Naive thymus-derived CD4-positive, alpha-beta T cell (primary cell): ENCODE measurements at regions of chr2 and their contacts with region 1.

Region 1: DNA sequence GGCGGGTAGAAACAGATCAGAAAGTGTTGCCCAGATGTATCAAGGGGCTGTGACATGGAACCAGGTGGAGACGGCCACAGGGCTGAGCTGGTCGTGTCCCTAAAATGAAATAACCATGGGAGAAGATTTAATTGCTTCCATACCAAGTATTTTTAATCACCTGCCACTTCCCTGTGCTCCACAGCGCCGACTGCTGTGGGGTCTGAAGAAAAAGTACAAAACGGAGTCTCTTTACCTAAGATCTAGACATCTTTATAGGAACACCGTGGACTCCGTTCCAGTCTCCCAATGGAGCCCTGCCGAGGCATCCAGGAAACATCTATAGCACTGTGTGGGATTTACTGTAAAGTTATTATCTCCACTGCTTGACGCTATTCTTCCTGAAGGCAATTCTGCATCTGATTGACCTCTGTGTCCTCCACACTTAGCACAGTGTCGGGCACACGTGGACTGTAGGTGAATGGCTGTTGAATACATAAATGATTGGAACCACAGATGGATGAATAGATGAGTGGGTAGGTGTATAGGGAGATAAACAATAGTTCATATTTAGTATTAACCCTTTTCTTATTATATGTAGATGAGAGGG is 21.6 kb upstream of the GYPC start:
- DNase-seq: peak in 7 of 9 donors; percentile 12 to 35 (median 21)
- ATAC-seq: peak; percentile 50
- H3K4me3 ChIP-seq: no peak overlapping the region
- H3K4me3 Mint-ChIP-seq: no peak overlapping the region
- H3K27ac ChIP-seq: no peak overlapping the region
- H3K27ac Mint-ChIP-seq: peak overlapping the region in 1 of 9 donors; percentile 33
- H3K4me1 ChIP-seq: no peaks in the 10 kb centered on the region
- H3K4me1 Mint-ChIP-seq: peaks cover 0 to 10% (median 4%) of the 10 kb centered on the region in 7 donors
- H3K27me3 ChIP-seq: peaks cover 0 to 3% of the 10 kb centered on the region in 2 donors
- H3K27me3 Mint-ChIP-seq: peaks cover 0 to 51% (median 0%) of the 10 kb centered on the region in 5 donors

Region 2: GRCh38 chr2:126527836-126528507 is 106.4 kb before region 1 on chr2:
- CTCF ChIA-PET with region 1: interaction called, 7 read pairs
- POLR2A ChIA-PET with region 1: no interaction called
- intact Hi-C with region 1: loop called (anchors 1 to 5 kb)
- DNase-seq: peak; percentile 43 to 74 (median 64)
- ATAC-seq: peak; percentile 79
- H3K4me3 ChIP-seq: no peak overlapping the region
- H3K4me3 Mint-ChIP-seq: no peak overlapping the region
- H3K27ac ChIP-seq: no peak overlapping the region
- H3K27ac Mint-ChIP-seq: no peak overlapping the region
- H3K4me1 ChIP-seq: no peaks in the 10 kb centered on the region
- H3K4me1 Mint-ChIP-seq: no peaks in the 10 kb centered on the region
- H3K27me3 ChIP-seq: no peaks in the 10 kb centered on the region
- H3K27me3 Mint-ChIP-seq: peaks cover 0 to 3% (median 0%) of the 10 kb centered on the region in 5 donors

Region 3: GRCh38 chr2:126664234-126664633 is 29.9 kb after region 1 on chr2:
- CTCF ChIA-PET with region 1: interaction called, 3 read pairs
- POLR2A ChIA-PET with region 1: interaction called, 9 read pairs
- intact Hi-C with region 1: loop called in 1 of 2 experiments (anchors 5 kb)
- DNase-seq: peak in 6 of 9 donors; percentile 31 to 47 (median 38)
- ATAC-seq: peak; percentile 70
- H3K4me3 ChIP-seq: peak overlapping the region; percentile 20
- H3K4me3 Mint-ChIP-seq: peak overlapping the region; percentile 68 to 95 (median 84)
- H3K27ac ChIP-seq: peak overlapping the region; percentile 98
- H3K27ac Mint-ChIP-seq: peak overlapping the region; percentile 93 to 99 (median 97)
- H3K4me1 ChIP-seq: peaks cover 56 to 71% of the 10 kb centered on the region in 2 donors
- H3K4me1 Mint-ChIP-seq: peaks cover 75 to 100% (median 95%) of the 10 kb centered on the region in 7 donors
- H3K27me3 ChIP-seq: no peaks in the 10 kb centered on the region
- H3K27me3 Mint-ChIP-seq: no peaks in the 10 kb centered on the region

Region 4: DNA sequence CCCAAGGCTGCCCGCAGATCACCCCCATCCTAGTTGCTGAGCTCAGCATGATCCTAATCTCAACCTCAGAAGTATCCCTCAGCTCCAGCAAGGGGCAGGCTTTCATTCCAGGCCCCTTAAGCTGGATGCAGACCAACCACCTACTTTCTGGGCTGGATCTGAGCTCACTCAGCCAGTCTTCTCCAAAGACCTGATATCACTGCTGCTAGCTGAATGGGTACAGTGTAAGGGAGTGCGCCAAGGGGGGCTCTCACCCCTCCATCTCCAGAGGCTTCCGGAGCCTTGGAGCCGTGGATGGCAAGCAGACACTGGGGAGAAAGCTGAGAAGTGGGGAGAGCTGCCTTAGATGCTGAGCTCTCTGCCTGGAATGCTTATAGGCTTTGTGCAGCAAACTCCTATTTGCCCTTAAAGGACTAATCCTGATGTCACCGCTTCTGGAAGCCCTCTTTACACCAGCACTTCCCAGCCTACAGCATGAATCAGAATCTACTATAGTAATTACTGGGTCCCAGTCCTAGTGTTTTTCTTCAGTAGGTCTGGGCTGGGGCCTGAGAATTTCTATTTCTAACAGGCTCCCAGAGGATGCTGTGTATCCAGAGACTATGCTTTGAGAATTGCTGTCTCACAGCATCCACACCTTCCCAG is 52.6 kb after region 1 on chr2:
- CTCF ChIA-PET with region 1: no interaction called
- POLR2A ChIA-PET with region 1: no interaction called
- intact Hi-C with region 1: loop called in 1 of 2 experiments (anchors 10 kb)
- DNase-seq: no peak
- ATAC-seq: no peak
- H3K4me3 ChIP-seq: no peak overlapping the region
- H3K4me3 Mint-ChIP-seq: no peak overlapping the region
- H3K27ac ChIP-seq: no peak overlapping the region
- H3K27ac Mint-ChIP-seq: peak overlapping the region in 2 of 9 donors; percentile 44 to 59
- H3K4me1 ChIP-seq: no peaks in the 10 kb centered on the region
- H3K4me1 Mint-ChIP-seq: peaks cover 24 to 62% (median 41%) of the 10 kb centered on the region in 7 donors
- H3K27me3 ChIP-seq: no peaks in the 10 kb centered on the region
- H3K27me3 Mint-ChIP-seq: no peaks in the 10 kb centered on the region

Region 5: GRCh38 chr2:126761981-126762878 is 127.9 kb after region 1 on chr2:
- CTCF ChIA-PET with region 1: no interaction called
- POLR2A ChIA-PET with region 1: no interaction called
- intact Hi-C with region 1: loop called in 1 of 2 experiments (anchors 5 kb)
- DNase-seq: peak in 7 of 9 donors; percentile 41 to 71 (median 59)
- ATAC-seq: peak; percentile 92
- H3K4me3 ChIP-seq: peak overlapping the region; percentile 42
- H3K4me3 Mint-ChIP-seq: peak overlapping the region; percentile 41 to 84 (median 71)
- H3K27ac ChIP-seq: peak overlapping the region; percentile 62
- H3K27ac Mint-ChIP-seq: peak overlapping the region; percentile 64 to 95 (median 89)
- H3K4me1 ChIP-seq: peaks cover 29 to 41% of the 10 kb centered on the region in 2 donors
- H3K4me1 Mint-ChIP-seq: peaks cover 39 to 87% (median 70%) of the 10 kb centered on the region in 7 donors
- H3K27me3 ChIP-seq: no peaks in the 10 kb centered on the region
- H3K27me3 Mint-ChIP-seq: peaks cover 0 to 30% (median 0%) of the 10 kb centered on the region in 5 donors